Motor neuron (in vitro differentiated cells): ENCODE measurements at regions of chr4 and their contacts with region 1.

Region 1: GRCh38 chr4:81040012-81040659 is 9.6 kb downstream of the BMP3 start:
- ATAC-seq: peak in 3 of 8 experiments; percentile 44 to 70 (median 52)
- H3K4me3 ChIP-seq: no peak overlapping the region
- H3K27ac ChIP-seq: no peak overlapping the region
- H3K4me1 ChIP-seq: no peaks in the 10 kb centered on the region

Region 2: GRCh38 chr4:80610845-80611677 is 429.1 kb before region 1 on chr4:
- in situ Hi-C with region 1: loop called in 1 of 9 experiments (anchors 25 kb)
- ATAC-seq: peak in 2 of 8 experiments; percentile 54 to 56
- H3K4me3 ChIP-seq: no peak overlapping the region
- H3K27ac ChIP-seq: no peak overlapping the region
- H3K4me1 ChIP-seq: no peaks in the 10 kb centered on the region

Region 3: DNA sequence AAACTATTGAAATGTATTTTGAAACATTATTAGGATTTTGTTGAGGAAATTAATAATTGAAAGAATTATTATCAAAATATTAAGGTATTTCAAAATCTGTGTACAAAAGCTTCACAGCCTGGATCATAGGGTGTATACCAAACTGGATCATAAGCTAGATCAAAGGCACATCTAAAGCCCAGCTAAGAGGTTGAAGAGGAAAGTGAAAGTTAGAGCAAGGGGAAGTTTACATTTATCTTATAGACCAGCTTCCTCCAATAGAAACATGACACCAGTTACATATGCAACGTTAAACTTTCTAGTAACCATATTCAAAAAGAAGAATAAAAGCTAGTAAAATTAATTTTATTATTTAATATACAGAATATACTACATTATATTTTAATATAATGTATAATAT is 236.8 kb before region 1 on chr4:
- in situ Hi-C with region 1: loop called in 1 of 9 experiments (anchors 25 kb)
- ATAC-seq: no peak
- H3K4me3 ChIP-seq: no peak overlapping the region
- H3K27ac ChIP-seq: no peak overlapping the region
- H3K4me1 ChIP-seq: no peaks in the 10 kb centered on the region

Region 4: GRCh38 chr4:81466841-81467671 is 426.9 kb after region 1 on chr4:
- in situ Hi-C with region 1: no loop called
- ATAC-seq: no peak
- H3K4me3 ChIP-seq: no peak overlapping the region
- H3K27ac ChIP-seq: no peak overlapping the region
- H3K4me1 ChIP-seq: peaks cover 16 to 25% of the 10 kb centered on the region in 2 donors